Naive thymus-derived CD4-positive, alpha-beta T cell (primary cell): ENCODE measurements at regions of chr14 and their contacts with region 1.

Region 1: DNA sequence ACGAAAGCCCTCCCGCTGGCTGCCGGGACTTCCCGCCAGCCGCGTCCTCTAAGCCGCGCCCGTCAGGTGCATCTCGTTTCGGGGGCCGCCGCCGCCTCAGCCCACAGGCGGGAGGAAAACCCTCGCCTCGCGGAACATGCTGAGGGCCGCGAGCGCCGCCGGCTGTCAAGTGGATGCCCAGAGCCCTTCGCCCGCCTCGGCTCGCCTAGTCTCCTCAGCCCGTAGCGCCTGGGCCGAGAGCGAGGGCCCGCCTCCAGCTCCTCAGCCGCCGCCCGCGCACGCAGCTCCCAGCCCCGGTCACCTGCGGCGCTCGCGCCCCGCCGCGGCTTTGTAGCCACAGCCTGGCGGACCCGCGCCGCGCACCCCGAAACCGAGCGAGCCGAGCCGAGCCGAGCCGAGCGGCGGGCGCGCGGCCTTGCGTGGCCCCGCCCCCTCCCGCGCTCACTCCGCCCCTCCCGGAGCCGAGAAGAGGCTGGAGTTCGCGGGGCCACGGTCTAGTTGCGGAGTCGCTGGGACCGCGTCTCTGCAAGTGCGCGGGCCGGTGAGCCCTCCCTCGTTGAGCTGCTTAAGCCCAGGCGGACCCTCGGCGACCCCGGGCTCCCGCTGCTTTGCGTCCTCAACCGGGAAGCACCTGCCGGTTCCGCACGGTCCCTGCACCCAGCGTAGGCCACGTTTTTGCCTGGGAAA is at the start of gene EML5:
- DNase-seq: peak; percentile 78 to 89 (median 86)
- ATAC-seq: peak; percentile 93
- H3K4me3 ChIP-seq: peak within 1 kb of the TSS; percentile 87
- H3K4me3 Mint-ChIP-seq: peak within 1 kb of the TSS; percentile 83 to 93 (median 91)
- H3K27ac ChIP-seq: peak within 1 kb of the TSS; percentile 78
- H3K27ac Mint-ChIP-seq: peak within 1 kb of the TSS; percentile 42 to 94 (median 77)
- H3K4me1 ChIP-seq: peaks cover 7 to 10% of the 10 kb centered on the region in 2 donors
- H3K4me1 Mint-ChIP-seq: peaks cover 8 to 29% (median 19%) of the 10 kb centered on the region in 7 donors
- H3K27me3 ChIP-seq: no peaks in the 10 kb centered on the region
- H3K27me3 Mint-ChIP-seq: peaks cover 0 to 36% (median 0%) of the 10 kb centered on the region in 5 donors
- total RNA-seq, gene EML5: 1.3 to 6.4 (median 5.4) TPM

Region 2: GRCh38 chr14:87992718-87993628 is 799.7 kb before region 1 on chr14 and contains the start of gene GALC:
- CTCF ChIA-PET with region 1: interaction called, 4 read pairs
- POLR2A ChIA-PET with region 1: no interaction called
- intact Hi-C with region 1: loop called in 1 of 2 experiments (anchors 1 kb)
- DNase-seq: peak; percentile 90 to 93 (median 92)
- ATAC-seq: peak; percentile 88
- H3K4me3 ChIP-seq: peak within 1 kb of the TSS; percentile 62
- H3K4me3 Mint-ChIP-seq: peak within 1 kb of the TSS; percentile 88 to 98 (median 94)
- H3K27ac ChIP-seq: peak within 1 kb of the TSS; percentile 94
- H3K27ac Mint-ChIP-seq: peak within 1 kb of the TSS; percentile 89 to 100 (median 99)
- H3K4me1 ChIP-seq: peaks cover 16 to 39% of the 10 kb centered on the region in 2 donors
- H3K4me1 Mint-ChIP-seq: peaks cover 40 to 74% (median 70%) of the 10 kb centered on the region in 7 donors
- H3K27me3 ChIP-seq: no peaks in the 10 kb centered on the region
- H3K27me3 Mint-ChIP-seq: no peaks in the 10 kb centered on the region
- total RNA-seq, gene GALC: 17.8 to 26.1 (median 22.3) TPM

Region 3: GRCh38 chr14:88562831-88563686 is 229.7 kb before region 1 on chr14 and contains the start of gene ZC3H14:
- CTCF ChIA-PET with region 1: no interaction called
- POLR2A ChIA-PET with region 1: no interaction called
- intact Hi-C with region 1: loop called (anchors 2 kb)
- DNase-seq: peak; percentile 80 to 91 (median 88)
- ATAC-seq: peak; percentile 98
- H3K4me3 ChIP-seq: peak within 1 kb of the TSS; percentile 84
- H3K4me3 Mint-ChIP-seq: peak within 1 kb of the TSS; percentile 89 to 96 (median 92)
- H3K27ac ChIP-seq: peak within 1 kb of the TSS; percentile 72
- H3K27ac Mint-ChIP-seq: peak within 1 kb of the TSS; percentile 49 to 94 (median 84)
- H3K4me1 ChIP-seq: peaks cover 12 to 13% of the 10 kb centered on the region in 2 donors
- H3K4me1 Mint-ChIP-seq: peaks cover 19 to 44% (median 38%) of the 10 kb centered on the region in 7 donors
- H3K27me3 ChIP-seq: no peaks in the 10 kb centered on the region
- H3K27me3 Mint-ChIP-seq: peaks cover 0 to 27% (median 0%) of the 10 kb centered on the region in 5 donors
- total RNA-seq, gene ZC3H14: 40.1 to 66.2 (median 45.6) TPM

Region 4: GRCh38 chr14:88824314-88825077 is 31.8 kb after region 1 on chr14 and contains the start of gene TTC8:
- CTCF ChIA-PET with region 1: interaction called, 4 read pairs
- POLR2A ChIA-PET with region 1: interaction called, 30 read pairs
- intact Hi-C with region 1: loop called (anchors 1 kb)
- DNase-seq: peak; percentile 75 to 92 (median 88)
- ATAC-seq: peak; percentile 98
- H3K4me3 ChIP-seq: peak within 1 kb of the TSS; percentile 74
- H3K4me3 Mint-ChIP-seq: peak within 1 kb of the TSS; percentile 72 to 98 (median 90)
- H3K27ac ChIP-seq: peak within 1 kb of the TSS; percentile 85
- H3K27ac Mint-ChIP-seq: peak within 1 kb of the TSS; percentile 97 to 99 (median 99)
- H3K4me1 ChIP-seq: peaks cover 5 to 6% of the 10 kb centered on the region in 2 donors
- H3K4me1 Mint-ChIP-seq: peaks cover 0 to 13% (median 11%) of the 10 kb centered on the region in 7 donors
- H3K27me3 ChIP-seq: no peaks in the 10 kb centered on the region
- H3K27me3 Mint-ChIP-seq: peaks cover 0 to 30% (median 8%) of the 10 kb centered on the region in 5 donors
- total RNA-seq, gene TTC8: 1.8 to 3.4 (median 2.1) TPM

Region 5: DNA sequence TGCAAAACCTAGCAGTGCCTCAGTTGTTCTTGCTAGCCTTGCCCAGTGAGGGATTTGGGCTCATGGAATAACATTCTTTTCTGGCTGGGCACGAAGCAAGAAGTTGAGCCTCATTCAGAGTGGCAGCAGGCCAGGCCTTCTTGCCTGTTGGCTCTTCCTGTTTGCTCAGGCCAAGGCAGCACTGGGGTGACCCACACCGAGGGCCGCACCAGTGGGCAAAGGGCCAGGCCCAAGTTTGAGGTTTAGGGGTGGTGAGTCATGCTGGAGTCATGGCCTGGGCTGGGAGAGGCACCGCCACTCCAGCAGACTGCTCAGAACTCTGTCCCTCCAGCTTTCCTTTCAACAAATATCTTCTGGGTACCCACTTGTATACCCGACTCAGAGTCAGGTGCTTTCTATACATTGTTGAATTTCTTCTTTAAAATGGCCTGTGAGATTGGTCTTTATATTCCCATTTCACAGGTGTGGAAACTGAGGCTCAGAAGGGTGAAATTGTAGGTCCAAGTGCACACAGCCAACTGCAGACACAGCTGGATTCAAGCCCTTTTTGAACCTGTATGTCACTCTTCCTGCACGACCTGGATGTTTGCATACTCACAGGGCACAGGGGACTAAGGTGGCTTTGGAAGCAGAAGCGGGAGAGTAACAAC is 344.9 kb after region 1 on chr14:
- CTCF ChIA-PET with region 1: no interaction called
- POLR2A ChIA-PET with region 1: no interaction called
- intact Hi-C with region 1: no loop called
- DNase-seq: no peak
- ATAC-seq: peak; percentile 71
- H3K4me3 ChIP-seq: no peak overlapping the region
- H3K4me3 Mint-ChIP-seq: no peak overlapping the region
- H3K27ac ChIP-seq: no peak overlapping the region
- H3K27ac Mint-ChIP-seq: no peak overlapping the region
- H3K4me1 ChIP-seq: no peaks in the 10 kb centered on the region
- H3K4me1 Mint-ChIP-seq: peaks cover 0 to 7% (median 2%) of the 10 kb centered on the region in 7 donors
- H3K27me3 ChIP-seq: no peaks in the 10 kb centered on the region
- H3K27me3 Mint-ChIP-seq: peaks cover 0 to 17% (median 0%) of the 10 kb centered on the region in 5 donors

Region 6: DNA sequence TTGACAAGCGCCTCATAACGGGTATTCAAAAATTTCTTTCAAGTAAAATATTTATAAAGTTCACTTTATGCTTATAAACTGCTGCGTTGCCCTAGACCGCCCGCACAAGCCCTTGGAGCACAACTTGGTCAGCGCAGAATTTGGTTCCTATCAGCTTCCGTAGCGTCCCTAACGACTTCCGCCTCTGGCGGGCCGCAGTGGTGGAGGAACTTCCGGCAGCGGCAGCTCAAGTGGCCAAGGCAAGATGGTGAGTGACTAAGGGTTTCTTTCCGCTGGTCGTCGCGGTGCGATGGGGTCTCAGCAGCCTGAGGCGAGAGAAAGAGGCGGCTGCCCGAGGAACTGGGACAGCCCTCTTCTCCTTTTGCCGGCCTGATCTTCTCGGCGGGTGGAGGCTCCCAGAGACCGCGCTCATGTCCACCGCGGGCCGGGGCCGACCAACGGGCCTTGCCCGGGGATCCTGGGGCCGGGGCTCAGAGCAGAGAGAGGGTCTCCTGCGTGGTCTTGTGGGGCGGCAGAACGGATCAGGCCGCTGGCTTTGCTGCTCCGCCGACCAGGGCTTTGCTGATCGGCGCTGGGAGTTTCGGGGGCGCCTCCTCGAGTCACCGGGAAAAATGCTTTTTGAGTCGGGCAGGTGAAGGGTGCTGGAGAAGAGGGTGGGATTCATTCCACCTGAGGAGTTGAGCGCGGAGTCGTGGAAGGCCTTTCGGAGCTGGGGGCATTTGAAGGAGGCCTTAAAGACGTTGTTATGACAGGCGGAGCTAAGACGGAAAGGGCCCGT is 1463.8 kb after region 1 on chr14 and contains the start of gene PSMC1:
- CTCF ChIA-PET with region 1: no interaction called
- POLR2A ChIA-PET with region 1: no interaction called
- intact Hi-C with region 1: loop called in 1 of 2 experiments (anchors 5 kb)
- DNase-seq: peak; percentile 51 to 89 (median 85)
- ATAC-seq: peak; percentile 97
- H3K4me3 ChIP-seq: peak within 1 kb of the TSS; percentile 87
- H3K4me3 Mint-ChIP-seq: peak within 1 kb of the TSS; percentile 86 to 99 (median 96)
- H3K27ac ChIP-seq: peak within 1 kb of the TSS; percentile 86
- H3K27ac Mint-ChIP-seq: peak within 1 kb of the TSS; percentile 90 to 98 (median 96)
- H3K4me1 ChIP-seq: peaks cover 13 to 17% of the 10 kb centered on the region in 2 donors
- H3K4me1 Mint-ChIP-seq: peaks cover 12 to 39% (median 34%) of the 10 kb centered on the region in 7 donors
- H3K27me3 ChIP-seq: no peaks in the 10 kb centered on the region
- H3K27me3 Mint-ChIP-seq: peaks cover 0 to 10% (median 7%) of the 10 kb centered on the region in 5 donors
- total RNA-seq, gene PSMC1: 47.9 to 101 (median 58.2) TPM